ENCODE measurements at regions of chr2 and their contacts with region 1.

Region 1: GRCh38 chr2:191051825-191052778 is 38.1 kb upstream of the STAT1 start:
- DNase-seq: peak; percentile 54
- H3K4me3 Mint-ChIP-seq: no peak overlapping the region
- H3K27ac Mint-ChIP-seq: no peak overlapping the region
- H3K4me1 Mint-ChIP-seq: peaks cover 23% of the 10 kb centered on the region
- H3K27me3 Mint-ChIP-seq: no peaks in the 10 kb centered on the region

Region 2: GRCh38 chr2:191023235-191023679 is 28.8 kb before region 1 on chr2:
- CTCF ChIA-PET with region 1: interaction called, 17 read pairs
- POLR2A ChIA-PET with region 1: no interaction called
- DNase-seq: peak; percentile 56
- H3K4me3 Mint-ChIP-seq: no peak overlapping the region
- H3K27ac Mint-ChIP-seq: no peak overlapping the region
- H3K4me1 Mint-ChIP-seq: peaks cover 57% of the 10 kb centered on the region
- H3K27me3 Mint-ChIP-seq: no peaks in the 10 kb centered on the region

Region 3: DNA sequence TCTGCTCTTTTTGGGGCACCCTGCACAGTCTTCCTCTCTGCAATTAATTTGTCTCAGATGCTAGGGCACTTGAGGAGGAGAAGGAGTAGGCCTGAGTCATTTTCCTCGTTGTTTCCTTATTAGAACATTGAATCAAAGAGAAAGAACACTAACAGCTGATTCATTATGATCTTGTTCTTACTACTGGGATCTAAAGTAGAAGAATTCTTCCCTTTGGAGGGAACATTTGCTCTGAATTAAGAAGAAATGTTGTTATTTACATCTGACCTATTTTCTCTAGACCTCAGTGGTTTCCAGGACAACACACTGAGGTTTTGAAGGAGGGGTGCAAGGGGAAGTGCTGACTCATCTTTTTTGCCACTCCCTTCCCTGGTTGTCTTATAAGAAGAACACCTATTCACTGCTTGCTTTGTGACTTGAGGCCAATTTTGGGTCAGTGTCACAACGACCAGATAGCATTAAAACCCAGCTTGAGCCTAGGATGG is 13.8 kb before region 1 on chr2:
- CTCF ChIA-PET with region 1: interaction called, 48 read pairs
- POLR2A ChIA-PET with region 1: no interaction called
- DNase-seq: peak; percentile 56
- H3K4me3 Mint-ChIP-seq: no peak overlapping the region
- H3K27ac Mint-ChIP-seq: peak overlapping the region; percentile 68
- H3K4me1 Mint-ChIP-seq: peaks cover 34% of the 10 kb centered on the region
- H3K27me3 Mint-ChIP-seq: no peaks in the 10 kb centered on the region

Region 4: GRCh38 chr2:191066197-191066918 is 14.3 kb after region 1 on chr2:
- CTCF ChIA-PET with region 1: interaction called, 21 read pairs
- POLR2A ChIA-PET with region 1: interaction called, 3 read pairs
- DNase-seq: no peak
- H3K4me3 Mint-ChIP-seq: peak overlapping the region; percentile 73
- H3K27ac Mint-ChIP-seq: peak overlapping the region; percentile 87
- H3K4me1 Mint-ChIP-seq: peaks cover 80% of the 10 kb centered on the region
- H3K27me3 Mint-ChIP-seq: no peaks in the 10 kb centered on the region

Region 5: GRCh38 chr2:191150600-191151330 is 98.7 kb after region 1 on chr2 and contains the start of gene STAT4:
- CTCF ChIA-PET with region 1: interaction called, 108 read pairs
- POLR2A ChIA-PET with region 1: interaction called, 5 read pairs
- DNase-seq: peak; percentile 85
- H3K4me3 Mint-ChIP-seq: peak within 1 kb of the TSS; percentile 93
- H3K27ac Mint-ChIP-seq: peak within 1 kb of the TSS; percentile 96
- H3K4me1 Mint-ChIP-seq: peaks cover 67% of the 10 kb centered on the region
- H3K27me3 Mint-ChIP-seq: no peaks in the 10 kb centered on the region
- total RNA-seq, gene STAT4: 72.6 to 84.4 TPM

Region 6: DNA sequence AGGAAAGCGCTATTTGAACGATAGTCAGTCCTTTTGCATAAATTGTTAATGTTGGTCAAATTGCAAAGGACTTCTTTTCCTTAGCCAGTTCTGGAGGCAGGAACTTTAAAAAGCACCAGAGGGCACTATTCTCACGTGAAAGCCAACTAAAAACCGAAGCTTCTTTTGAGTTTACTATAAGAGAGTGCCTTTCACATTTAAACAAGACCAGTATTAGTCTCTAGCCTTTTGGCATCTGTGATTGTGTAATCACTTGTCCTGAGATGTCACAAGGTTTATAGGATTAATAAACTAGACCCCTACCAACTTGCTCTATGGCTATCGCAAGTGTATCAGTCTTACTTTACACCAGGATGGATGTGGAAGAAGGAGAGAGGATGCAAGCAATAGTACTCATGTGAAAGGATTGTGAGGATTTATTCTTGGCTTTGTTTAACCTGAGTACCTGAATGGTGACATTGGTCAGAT is 113.1 kb after region 1 on chr2:
- CTCF ChIA-PET with region 1: interaction called, 69 read pairs
- POLR2A ChIA-PET with region 1: no interaction called
- DNase-seq: peak; percentile 56
- H3K4me3 Mint-ChIP-seq: no peak overlapping the region
- H3K27ac Mint-ChIP-seq: no peak overlapping the region
- H3K4me1 Mint-ChIP-seq: peaks cover 16% of the 10 kb centered on the region
- H3K27me3 Mint-ChIP-seq: peaks cover 10% of the 10 kb centered on the region

Region 7: DNA sequence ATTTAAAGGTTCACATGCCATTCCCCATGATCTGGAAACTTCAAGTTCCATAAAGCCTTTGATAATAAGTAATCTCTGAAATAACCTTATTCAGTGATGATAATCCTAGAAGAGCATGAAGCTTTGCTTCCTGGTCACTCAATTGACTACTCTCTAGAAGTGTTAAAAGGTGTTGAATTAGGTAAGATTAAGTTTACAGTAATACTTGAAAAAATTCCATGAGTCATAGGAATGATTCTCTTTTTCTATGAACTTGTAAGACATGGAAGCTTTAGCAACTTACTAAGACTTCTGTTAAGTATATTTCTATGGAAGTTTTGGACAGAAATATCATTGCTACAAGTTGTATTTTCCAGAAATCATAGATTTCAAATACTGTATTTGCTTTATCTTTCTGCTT is 293.7 kb after region 1 on chr2:
- CTCF ChIA-PET with region 1: no interaction called
- POLR2A ChIA-PET with region 1: no interaction called
- DNase-seq: no peak
- H3K4me3 Mint-ChIP-seq: no peak overlapping the region
- H3K27ac Mint-ChIP-seq: no peak overlapping the region
- H3K4me1 Mint-ChIP-seq: no peaks in the 10 kb centered on the region
- H3K27me3 Mint-ChIP-seq: no peaks in the 10 kb centered on the region